ENCODE measurements at regions of chr10 and their contacts with region 1.

Region 1: DNA sequence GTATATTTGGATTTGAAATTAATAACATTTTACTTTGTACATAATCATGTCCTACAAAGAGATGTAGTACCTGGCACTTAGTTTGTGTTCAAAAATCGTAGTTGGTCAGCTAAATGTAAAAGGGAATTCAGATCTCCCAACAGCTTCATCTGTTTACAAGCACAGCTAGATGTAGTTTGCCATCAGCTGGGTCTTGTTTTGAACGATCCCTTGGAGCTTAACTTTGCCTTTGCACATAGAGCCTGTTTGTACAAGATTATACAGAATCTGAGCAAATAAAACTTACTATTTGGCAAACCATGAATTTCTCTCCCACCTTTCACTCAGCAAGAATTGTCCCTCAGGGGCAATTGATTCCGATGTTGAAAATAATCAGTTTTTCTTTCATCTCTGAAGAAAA is 36.1 kb upstream of the ADD3 start:
- DNase-seq: no peak
- H3K4me3 Mint-ChIP-seq: no peak overlapping the region
- H3K27ac Mint-ChIP-seq: no peak overlapping the region
- H3K4me1 Mint-ChIP-seq: no peaks in the 10 kb centered on the region
- H3K27me3 Mint-ChIP-seq: peaks cover 22% of the 10 kb centered on the region

Region 2: GRCh38 chr10:109922976-109923921 is 48.4 kb before region 1 on chr10 and contains the start of gene XPNPEP1:
- intact Hi-C with region 1: no loop called
- DNase-seq: peak; percentile 81
- H3K4me3 Mint-ChIP-seq: peak within 1 kb of the TSS; percentile 94
- H3K27ac Mint-ChIP-seq: peak within 1 kb of the TSS; percentile 92
- H3K4me1 Mint-ChIP-seq: peaks cover 58% of the 10 kb centered on the region
- H3K27me3 Mint-ChIP-seq: peaks cover 5% of the 10 kb centered on the region
- total RNA-seq, gene XPNPEP1: 85.1 and 93.2 TPM in 2 replicates

Region 3: DNA sequence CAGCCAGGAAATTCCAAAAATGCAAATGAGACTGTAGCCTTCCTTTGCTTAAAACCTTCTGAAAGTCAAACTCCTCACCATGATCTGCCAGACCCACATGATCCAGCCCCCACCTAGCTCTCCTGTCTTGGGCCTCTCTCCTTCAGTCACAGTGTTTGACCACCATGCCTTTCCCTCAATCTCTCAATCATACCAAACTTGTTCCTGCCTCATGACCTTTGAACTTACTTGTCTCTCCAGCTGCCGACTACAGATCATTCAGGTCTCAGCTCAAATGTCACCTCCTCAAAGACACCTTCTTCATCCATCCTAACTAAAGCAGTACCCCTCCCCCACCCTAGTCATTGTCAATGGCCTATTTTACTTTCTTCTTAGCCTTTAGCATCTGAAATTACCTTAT is 26.9 kb after region 1 on chr10:
- intact Hi-C with region 1: loop called (anchors 1 kb)
- DNase-seq: no peak
- H3K4me3 Mint-ChIP-seq: no peak overlapping the region
- H3K27ac Mint-ChIP-seq: no peak overlapping the region
- H3K4me1 Mint-ChIP-seq: peaks cover 18% of the 10 kb centered on the region
- H3K27me3 Mint-ChIP-seq: peaks cover 3% of the 10 kb centered on the region

Region 4: GRCh38 chr10:110336111-110336721 is 364.6 kb after region 1 on chr10:
- intact Hi-C with region 1: no loop called
- DNase-seq: no peak
- H3K4me3 Mint-ChIP-seq: no peak overlapping the region
- H3K27ac Mint-ChIP-seq: peak overlapping the region; percentile 46
- H3K4me1 Mint-ChIP-seq: peaks cover 53% of the 10 kb centered on the region
- H3K27me3 Mint-ChIP-seq: no peaks in the 10 kb centered on the region

Region 5: DNA sequence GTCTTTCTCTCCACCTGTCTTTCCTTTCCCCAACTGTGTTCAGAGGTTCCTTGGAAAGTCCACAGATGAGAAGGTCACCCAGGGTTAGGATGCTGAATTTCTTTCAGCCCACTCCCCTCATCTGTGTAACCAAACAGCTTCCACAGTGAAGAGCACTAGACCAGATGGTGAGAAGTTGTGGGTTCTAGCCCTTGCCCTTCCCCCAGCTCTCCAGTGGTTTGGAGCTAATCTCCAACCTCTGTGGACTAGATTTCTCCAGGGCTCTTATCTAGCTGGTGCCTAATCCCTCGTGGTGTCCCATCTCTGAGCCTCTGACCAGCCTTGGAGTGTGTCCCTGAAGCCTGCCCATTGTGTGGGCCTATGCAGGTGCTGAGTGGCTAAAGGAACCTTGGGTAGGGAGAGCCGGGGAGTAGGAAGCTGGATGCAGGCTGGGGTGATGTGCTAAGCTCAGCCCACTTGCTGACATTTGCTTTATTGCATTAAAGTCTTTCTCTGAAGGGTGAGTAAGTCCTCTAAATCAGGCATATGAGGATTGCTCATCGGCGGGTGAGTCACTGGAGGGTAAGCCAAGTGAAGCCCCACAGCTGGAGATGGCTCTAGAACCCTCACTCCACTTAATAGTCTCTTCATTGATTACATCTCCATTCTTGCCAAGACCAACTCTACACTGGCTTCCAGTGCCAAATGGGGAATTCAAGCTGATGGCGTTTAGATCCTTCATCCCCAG is 541.0 kb after region 1 on chr10:
- intact Hi-C with region 1: no loop called
- DNase-seq: no peak
- H3K4me3 Mint-ChIP-seq: peak overlapping the region; percentile 34
- H3K27ac Mint-ChIP-seq: peak overlapping the region; percentile 75
- H3K4me1 Mint-ChIP-seq: peaks cover 65% of the 10 kb centered on the region
- H3K27me3 Mint-ChIP-seq: no peaks in the 10 kb centered on the region

Measured in activated T-helper 1 cell treated with anti-CD3 and anti-CD28 coated beads, Interleukin-12 subunit alpha, Interleukin-12 subunit beta, Interleukin-2, Interleukin-4 antibody, amounts not matched to agents 30 ng/mL and 10 ng/mL and 1 ng/mL, durations not matched to agents 14 hours and 24 hours and 36 hours (primary cell).